Activated B cell treated with CpG ODN at 0.5 μM for 24 hours (primary cell): ENCODE measurements at regions of chr19 and their contacts with region 1.

Region 1: GRCh38 chr19:42113641-42114348 is 18.5 kb downstream of the POU2F2 start:
- DNase-seq: peak; percentile 68
- ATAC-seq: peak; percentile 77
- H3K4me3 Mint-ChIP-seq: peak overlapping the region; percentile 83
- H3K27ac Mint-ChIP-seq: peak overlapping the region; percentile 96
- H3K4me1 Mint-ChIP-seq: peaks cover 95% of the 10 kb centered on the region
- H3K27me3 Mint-ChIP-seq: no peaks in the 10 kb centered on the region
- CTCF ChIP-seq: no peak

Region 2: DNA sequence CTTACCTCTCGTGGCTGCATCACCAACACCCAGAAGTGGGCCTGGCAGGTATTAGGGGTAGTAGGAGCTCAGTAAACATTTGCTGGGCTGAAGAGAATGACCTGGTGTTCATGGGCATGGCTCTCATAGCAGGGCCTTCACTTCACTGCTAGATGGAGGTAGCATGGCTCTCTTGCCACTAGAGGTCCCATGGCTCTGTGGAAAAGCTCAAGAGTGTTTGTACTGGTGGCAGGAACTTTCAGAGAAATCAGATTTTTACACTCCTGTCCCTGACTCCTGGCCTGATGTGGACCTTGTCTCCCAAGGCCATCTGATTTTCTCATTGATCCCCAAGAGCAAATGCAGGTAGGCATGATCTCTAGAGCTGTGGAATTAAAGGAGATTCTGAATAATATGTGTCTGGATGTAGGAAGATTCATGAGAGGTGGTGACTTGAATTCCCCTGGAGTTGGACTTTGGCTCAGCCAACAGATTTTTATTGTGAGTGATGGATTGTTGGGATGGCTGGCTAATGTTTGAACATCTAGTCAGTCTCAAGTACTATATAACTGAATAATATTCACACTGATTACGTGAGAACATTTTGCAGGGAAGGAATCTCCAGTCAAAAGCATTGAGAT is 32.1 kb before region 1 on chr19:
- CTCF ChIA-PET with region 1: interaction called, 3 read pairs
- POLR2A ChIA-PET with region 1: interaction called, 10 read pairs
- intact Hi-C with region 1: no loop called
- DNase-seq: no peak
- ATAC-seq: peak; percentile 51
- H3K4me3 Mint-ChIP-seq: no peak overlapping the region
- H3K27ac Mint-ChIP-seq: peak overlapping the region; percentile 5
- H3K4me1 Mint-ChIP-seq: peaks cover 35% of the 10 kb centered on the region
- H3K27me3 Mint-ChIP-seq: no peaks in the 10 kb centered on the region
- CTCF ChIP-seq: no peak

Region 3: DNA sequence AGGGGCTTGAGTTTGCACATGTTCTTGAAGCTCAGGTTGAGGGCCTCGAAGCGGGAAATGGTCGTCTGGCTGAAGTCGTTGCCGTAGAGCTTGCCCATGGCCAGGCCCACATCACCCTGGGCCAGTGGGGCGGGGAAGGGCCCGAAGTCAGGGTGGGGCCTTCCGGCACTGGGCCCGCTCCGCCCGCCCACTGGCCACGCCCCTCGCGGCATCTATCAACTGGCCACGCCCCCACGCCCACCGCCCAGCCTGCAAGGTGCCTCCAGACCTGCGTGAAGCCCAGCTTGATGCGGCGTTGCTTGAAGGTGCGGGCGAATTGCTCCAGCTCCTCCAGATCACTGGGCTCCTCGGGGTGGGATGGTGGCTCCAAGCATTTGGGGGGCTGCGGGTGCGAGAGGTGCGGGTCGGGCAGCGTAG is 18.0 kb before region 1 on chr19:
- CTCF ChIA-PET with region 1: interaction called, 7 read pairs
- POLR2A ChIA-PET with region 1: interaction called, 1,230 read pairs
- intact Hi-C with region 1: no loop called
- DNase-seq: no peak
- ATAC-seq: peak; percentile 21
- H3K4me3 Mint-ChIP-seq: no peak overlapping the region
- H3K27ac Mint-ChIP-seq: no peak overlapping the region
- H3K4me1 Mint-ChIP-seq: peaks cover 15% of the 10 kb centered on the region
- H3K27me3 Mint-ChIP-seq: no peaks in the 10 kb centered on the region
- CTCF ChIP-seq: no peak

Region 4: DNA sequence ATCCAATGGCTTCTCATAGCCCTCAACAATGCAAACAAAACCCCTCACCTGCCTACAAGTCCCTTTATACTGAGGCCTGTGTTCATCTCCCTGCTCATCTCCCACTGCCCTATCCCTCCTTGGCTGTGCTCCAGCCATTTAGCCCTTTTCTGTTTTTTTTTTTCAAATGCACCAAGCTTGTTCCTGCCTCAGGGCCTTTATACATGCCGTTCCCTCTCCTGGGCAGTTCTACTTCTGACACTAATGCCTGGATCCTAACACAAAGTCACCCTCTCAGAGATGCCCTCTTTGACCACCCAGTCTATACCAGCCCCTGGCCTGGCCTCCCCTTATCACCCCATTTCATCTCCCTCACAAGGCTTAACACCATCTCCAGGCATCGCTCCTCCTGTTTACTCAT is 10.9 kb before region 1 on chr19:
- CTCF ChIA-PET with region 1: interaction called, 426 read pairs
- POLR2A ChIA-PET with region 1: interaction called, 1,230 read pairs
- intact Hi-C with region 1: loop called (anchors 1 kb)
- DNase-seq: no peak
- ATAC-seq: no peak
- H3K4me3 Mint-ChIP-seq: no peak overlapping the region
- H3K27ac Mint-ChIP-seq: peak overlapping the region; percentile 15
- H3K4me1 Mint-ChIP-seq: peaks cover 22% of the 10 kb centered on the region
- H3K27me3 Mint-ChIP-seq: no peaks in the 10 kb centered on the region
- CTCF ChIP-seq: no peak

Region 5: DNA sequence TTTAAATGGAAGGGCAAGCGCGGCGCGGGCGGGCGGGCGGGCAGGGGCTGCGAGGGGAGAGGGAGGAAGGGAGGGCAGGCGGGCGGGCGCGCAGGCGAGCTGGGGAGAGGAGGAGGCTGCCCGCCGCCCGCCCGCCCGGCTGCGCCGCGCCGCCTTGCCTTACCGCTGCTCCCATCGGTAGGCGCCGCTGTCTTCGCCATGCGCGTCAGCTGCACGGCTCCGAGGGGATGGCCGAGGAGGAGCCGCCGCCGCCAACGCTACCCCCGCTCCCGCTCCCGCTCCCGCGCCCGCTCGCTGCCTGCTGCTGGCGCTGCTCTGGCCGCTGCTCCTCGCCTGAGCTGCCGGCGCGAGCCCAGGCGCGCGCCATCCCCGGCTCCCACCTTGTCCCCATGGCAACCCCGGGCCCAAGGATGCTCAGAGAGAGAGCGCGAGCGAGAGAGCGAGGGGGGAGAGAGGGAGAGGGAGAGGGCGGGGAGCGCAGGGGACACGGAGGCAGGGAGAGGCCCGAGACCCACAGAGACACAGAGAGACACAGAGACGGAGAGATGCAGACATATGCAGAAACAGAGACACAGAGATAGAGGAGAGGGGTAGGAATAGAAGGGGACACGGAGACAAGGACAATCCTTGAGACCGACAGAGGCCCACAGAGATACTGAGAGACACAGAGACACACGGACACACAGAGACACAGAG is 63.3 kb after region 1 on chr19:
- CTCF ChIA-PET with region 1: interaction called, 20 read pairs
- POLR2A ChIA-PET with region 1: interaction called, 10 read pairs
- intact Hi-C with region 1: loop called (anchors 1 kb)
- DNase-seq: peak; percentile 71
- ATAC-seq: peak; percentile 91
- H3K4me3 Mint-ChIP-seq: no peak overlapping the region
- H3K27ac Mint-ChIP-seq: no peak overlapping the region
- H3K4me1 Mint-ChIP-seq: peaks cover 15% of the 10 kb centered on the region
- H3K27me3 Mint-ChIP-seq: peaks cover 20% of the 10 kb centered on the region
- CTCF ChIP-seq: no peak

Region 6: GRCh38 chr19:42199440-42200115 is 85.8 kb after region 1 on chr19:
- CTCF ChIA-PET with region 1: interaction called, 9 read pairs
- POLR2A ChIA-PET with region 1: interaction called, 9 read pairs
- intact Hi-C with region 1: loop called (anchors 5 kb)
- DNase-seq: peak; percentile 47
- ATAC-seq: peak; percentile 44
- H3K4me3 Mint-ChIP-seq: peak overlapping the region; percentile 68
- H3K27ac Mint-ChIP-seq: peak overlapping the region; percentile 93
- H3K4me1 Mint-ChIP-seq: peaks cover 87% of the 10 kb centered on the region
- H3K27me3 Mint-ChIP-seq: no peaks in the 10 kb centered on the region
- CTCF ChIP-seq: no peak